ENCODE measurements at regions of chr4 and their contacts with region 1.

Region 1: GRCh38 chr4:54058171-54058570 is 6.2 kb downstream of the CHIC2 start:
- DNase-seq: no peak
- H3K4me3 Mint-ChIP-seq: no peak overlapping the region
- H3K27ac Mint-ChIP-seq: no peak overlapping the region
- H3K4me1 Mint-ChIP-seq: peaks cover 19% of the 10 kb centered on the region
- H3K27me3 Mint-ChIP-seq: no peaks in the 10 kb centered on the region
- CTCF ChIP-seq: no peak

Region 2: DNA sequence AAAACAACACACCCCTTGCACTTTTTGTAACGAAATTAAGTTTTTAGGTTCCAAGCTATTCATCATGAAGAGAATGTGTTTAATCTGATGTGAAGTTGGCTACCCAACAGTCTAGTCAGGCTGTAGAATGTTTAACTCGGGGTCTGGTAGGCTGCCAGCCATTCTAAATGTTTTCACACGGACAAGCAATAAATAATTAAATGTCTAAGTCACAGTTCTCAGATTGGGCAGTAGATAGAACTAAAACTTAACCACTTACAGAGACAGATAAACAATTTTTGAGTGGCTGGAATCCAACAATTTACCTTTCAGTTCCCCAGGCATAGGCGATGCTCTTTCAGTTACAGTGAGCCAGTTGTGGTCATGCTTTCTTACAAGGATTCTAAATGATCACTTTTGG is 60.3 kb before region 1 on chr4:
- CTCF ChIA-PET with region 1: no interaction called
- intact Hi-C with region 1: loop called (anchors 5 kb)
- DNase-seq: peak; percentile 25
- H3K4me3 Mint-ChIP-seq: no peak overlapping the region
- H3K27ac Mint-ChIP-seq: no peak overlapping the region
- H3K4me1 Mint-ChIP-seq: peaks cover 9% of the 10 kb centered on the region
- H3K27me3 Mint-ChIP-seq: no peaks in the 10 kb centered on the region
- CTCF ChIP-seq: no peak

Region 3: DNA sequence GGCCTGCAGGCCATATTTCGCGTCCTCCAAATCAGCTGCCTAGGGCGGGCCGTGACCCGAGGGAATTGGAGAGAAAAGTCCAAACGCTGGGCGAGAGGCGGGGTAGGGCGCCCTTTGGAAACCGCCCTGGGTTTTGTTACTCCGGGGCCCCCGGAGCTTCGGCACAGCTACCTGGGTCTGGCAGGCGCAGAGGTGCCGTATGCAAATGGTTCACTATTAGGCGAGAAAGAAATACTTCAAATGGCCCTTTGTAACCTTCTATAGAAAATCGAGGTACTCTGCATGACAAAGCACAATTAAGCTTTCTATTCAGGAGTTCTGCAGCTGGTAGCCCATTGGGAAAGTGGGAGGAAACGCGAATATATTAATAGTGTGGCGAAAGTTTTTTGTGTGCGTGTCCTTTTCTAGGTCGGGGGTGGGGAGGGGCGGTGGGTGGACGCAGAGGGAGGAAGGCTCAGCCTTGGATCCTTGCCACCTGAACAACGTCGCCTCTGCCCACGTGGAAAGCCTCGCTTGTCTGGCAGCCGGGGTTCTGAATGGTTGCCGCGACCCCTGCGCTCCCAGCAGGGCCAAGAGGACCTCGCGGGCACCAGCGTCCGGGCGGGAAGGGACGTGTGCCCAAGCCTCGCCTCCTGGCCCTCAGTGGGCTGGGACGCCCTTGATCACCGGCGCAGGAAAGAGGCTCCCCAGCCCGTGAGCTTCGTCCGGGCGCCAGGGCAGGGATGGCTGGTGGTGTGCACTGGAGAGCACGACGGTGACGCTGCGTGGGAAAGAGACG is 51.3 kb after region 1 on chr4:
- CTCF ChIA-PET with region 1: no interaction called
- intact Hi-C with region 1: no loop called
- DNase-seq: no peak
- H3K4me3 Mint-ChIP-seq: no peak overlapping the region
- H3K27ac Mint-ChIP-seq: no peak overlapping the region
- H3K4me1 Mint-ChIP-seq: peaks cover 8% of the 10 kb centered on the region
- H3K27me3 Mint-ChIP-seq: peaks cover 47% of the 10 kb centered on the region
- CTCF ChIP-seq: no peak